ENCODE measurements at regions of chr11 and their contacts with region 1.

Region 1: GRCh38 chr11:122853971-122854446 is 15.7 kb downstream of the CRTAM start:
- DNase-seq: peak; percentile 84
- ATAC-seq: peak; percentile 69
- H3K4me3 ChIP-seq: no peak overlapping the region
- H3K27ac ChIP-seq: no peak overlapping the region
- H3K4me1 ChIP-seq: peaks cover 8 to 42% of the 10 kb centered on the region in 2 experiments; a peak in 3 of 4 replicates
- H3K27me3 ChIP-seq: no peaks in the 10 kb centered on the region
- CTCF ChIP-seq: peak; percentile 48 to 96 (median 85)
- POLR2A ChIP-seq: no peak
- RAD21 ChIP-seq: peak; percentile 96

Region 2: DNA sequence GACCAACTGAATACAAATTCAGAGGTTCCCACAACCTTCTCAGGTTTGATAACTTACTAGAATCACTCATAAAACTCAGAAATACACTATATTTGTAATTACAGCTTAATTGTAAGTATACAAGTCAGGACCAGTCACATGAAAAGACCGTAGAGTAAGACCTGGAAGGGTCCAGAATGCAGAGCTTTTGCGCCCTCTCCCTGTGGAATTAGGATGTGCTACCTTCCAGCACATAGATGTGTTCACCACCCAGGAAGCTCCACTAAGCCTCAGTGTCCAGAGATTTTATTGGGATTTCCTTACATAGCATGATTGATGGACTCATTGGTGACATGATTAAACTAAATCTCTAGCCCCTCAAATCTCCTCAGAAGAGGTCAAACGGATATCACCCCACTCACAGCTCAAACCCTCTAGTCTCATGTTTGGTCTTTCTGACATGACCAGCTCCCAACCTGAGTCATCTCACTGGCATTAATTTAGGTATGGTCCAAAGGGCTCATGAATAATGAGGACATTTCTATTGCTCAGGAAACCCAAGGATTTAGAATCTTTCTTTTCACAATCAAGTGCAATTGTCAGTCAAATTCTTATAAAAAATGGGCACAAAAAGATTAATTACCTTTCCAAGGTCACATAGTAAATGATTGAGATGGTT is 275.7 kb before region 1 on chr11:
- CTCF ChIA-PET with region 1: interaction called, 14 read pairs
- POLR2A ChIA-PET with region 1: no interaction called
- RAD21 ChIA-PET with region 1: no interaction called
- intact Hi-C with region 1: loop called (anchors 1 kb)
- DNase-seq: no peak
- ATAC-seq: no peak
- H3K4me3 ChIP-seq: no peak overlapping the region
- H3K27ac ChIP-seq: no peak overlapping the region
- H3K4me1 ChIP-seq: peaks cover 8 to 21% of the 10 kb centered on the region in 2 experiments
- H3K27me3 ChIP-seq: no peaks in the 10 kb centered on the region
- CTCF ChIP-seq: peak in 1 of 3 experiments; percentile 23; a peak in 1 of 6 replicates
- POLR2A ChIP-seq: no peak
- RAD21 ChIP-seq: peak; percentile 40

Region 3: DNA sequence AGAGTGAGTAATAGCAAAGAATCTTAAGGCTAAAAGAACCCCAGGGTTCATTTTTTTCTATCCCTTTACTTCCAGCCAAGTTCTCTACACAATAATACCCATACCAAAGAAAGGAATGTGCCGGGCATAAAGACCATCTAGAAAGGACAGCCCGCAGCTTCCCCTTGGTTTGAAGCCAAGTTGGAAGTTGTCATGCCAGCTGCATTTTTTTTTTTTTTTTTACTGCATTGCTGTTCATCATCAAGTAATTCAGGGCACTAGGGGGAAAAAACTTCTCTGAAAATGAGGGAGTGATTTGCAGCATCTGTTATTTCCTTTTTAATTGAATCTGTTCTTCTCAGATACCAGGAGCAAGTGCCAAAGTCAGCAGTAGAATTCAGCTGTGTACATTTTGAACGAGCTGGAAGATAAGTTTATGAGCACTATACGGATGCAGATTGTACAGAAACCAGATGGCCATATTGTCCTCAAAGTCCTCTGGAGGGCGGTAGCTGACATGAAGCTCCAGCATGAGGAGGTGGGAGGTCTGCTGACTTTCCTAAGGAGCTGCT is 142.1 kb before region 1 on chr11:
- CTCF ChIA-PET with region 1: no interaction called
- POLR2A ChIA-PET with region 1: no interaction called
- RAD21 ChIA-PET with region 1: no interaction called
- intact Hi-C with region 1: no loop called
- DNase-seq: no peak
- ATAC-seq: no peak
- H3K4me3 ChIP-seq: no peak overlapping the region
- H3K27ac ChIP-seq: no peak overlapping the region
- H3K4me1 ChIP-seq: peaks cover 17 to 31% of the 10 kb centered on the region in 2 experiments
- H3K27me3 ChIP-seq: no peaks in the 10 kb centered on the region
- CTCF ChIP-seq: no peak
- POLR2A ChIP-seq: no peak
- RAD21 ChIP-seq: no peak

Region 4: GRCh38 chr11:122781378-122782195 is 72.4 kb before region 1 on chr11:
- CTCF ChIA-PET with region 1: interaction called, 17 read pairs
- POLR2A ChIA-PET with region 1: no interaction called
- RAD21 ChIA-PET with region 1: no interaction called
- intact Hi-C with region 1: no loop called
- DNase-seq: peak; percentile 67
- ATAC-seq: peak; percentile 99
- H3K4me3 ChIP-seq: no peak overlapping the region
- H3K27ac ChIP-seq: no peak overlapping the region
- H3K4me1 ChIP-seq: peaks cover 0 to 6% of the 10 kb centered on the region in 2 experiments; a peak in 2 of 4 replicates
- H3K27me3 ChIP-seq: no peaks in the 10 kb centered on the region
- CTCF ChIP-seq: peak; percentile 88 to 94 (median 92)
- POLR2A ChIP-seq: no peak
- RAD21 ChIP-seq: peak; percentile 94

Region 5: GRCh38 chr11:122814401-122814800 is 39.6 kb before region 1 on chr11:
- CTCF ChIA-PET with region 1: interaction called, 18 read pairs
- POLR2A ChIA-PET with region 1: no interaction called
- RAD21 ChIA-PET with region 1: no interaction called
- intact Hi-C with region 1: loop called (anchors 1 kb)
- DNase-seq: no peak
- ATAC-seq: peak; percentile 67
- H3K4me3 ChIP-seq: no peak overlapping the region
- H3K27ac ChIP-seq: no peak overlapping the region
- H3K4me1 ChIP-seq: peaks cover 17 to 18% of the 10 kb centered on the region in 2 experiments
- H3K27me3 ChIP-seq: no peaks in the 10 kb centered on the region
- CTCF ChIP-seq: peak; percentile 43 to 55 (median 55); a peak in 5 of 6 replicates
- POLR2A ChIP-seq: no peak
- RAD21 ChIP-seq: peak; percentile 71

Region 6: DNA sequence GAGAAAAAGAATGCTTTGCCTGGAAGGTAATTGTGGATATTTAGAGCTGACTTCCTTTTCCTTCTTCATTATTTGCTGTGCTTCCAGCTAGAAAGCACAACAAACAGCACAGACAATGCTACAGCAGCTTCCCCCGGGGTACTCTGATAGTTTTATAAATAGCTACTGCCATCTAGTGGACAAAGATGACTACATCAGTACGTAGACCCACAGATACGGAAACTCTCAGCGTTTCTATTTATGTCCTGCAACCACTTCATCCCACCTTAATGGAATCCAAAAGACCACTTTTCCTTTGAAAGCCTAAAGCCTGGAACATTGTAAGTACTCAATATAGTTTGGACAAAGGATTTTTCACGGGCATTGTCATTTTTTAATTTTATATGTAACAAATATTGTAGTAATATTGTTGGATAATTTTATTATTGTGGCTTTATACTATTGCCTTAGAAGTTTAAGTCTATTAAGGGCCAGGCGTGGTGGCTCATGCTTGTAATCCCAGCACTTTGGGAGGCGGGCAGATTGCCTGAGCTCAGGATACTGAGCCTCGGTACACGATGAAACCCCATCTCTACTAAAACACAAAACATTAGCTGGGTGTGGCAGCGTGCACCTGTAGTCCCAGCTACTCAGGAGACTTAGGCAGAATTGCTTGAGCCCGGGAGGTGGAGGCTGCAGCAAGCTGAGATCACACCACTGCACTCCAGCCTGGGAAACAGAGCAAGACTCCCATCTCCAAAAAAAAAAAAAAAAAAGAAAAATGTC is 200.5 kb after region 1 on chr11:
- CTCF ChIA-PET with region 1: interaction called, 18 read pairs
- POLR2A ChIA-PET with region 1: no interaction called
- RAD21 ChIA-PET with region 1: no interaction called
- intact Hi-C with region 1: no loop called
- DNase-seq: peak; percentile 56
- ATAC-seq: peak; percentile 66
- H3K4me3 ChIP-seq: no peak overlapping the region
- H3K27ac ChIP-seq: no peak overlapping the region
- H3K4me1 ChIP-seq: peaks cover 0 to 7% of the 10 kb centered on the region in 2 experiments; a peak in 1 of 4 replicates
- H3K27me3 ChIP-seq: no peaks in the 10 kb centered on the region
- CTCF ChIP-seq: peak; percentile 54 to 75 (median 59); a peak in 5 of 6 replicates
- POLR2A ChIP-seq: peak; percentile 9
- RAD21 ChIP-seq: peak; percentile 77

Measured in HCT116 (cell line).